Activated T-helper 1 cell treated with anti-CD3 and anti-CD28 coated beads, Interleukin-12 subunit alpha, Interleukin-12 subunit beta, Interleukin-2, Interleukin-4 antibody, amounts not matched to agents 30 ng/mL and 10 ng/mL and 1 ng/mL, durations not matched to agents 14 hours and 24 hours and 36 hours (primary cell): ENCODE measurements at regions of chr1 and their contacts with region 1.

Region 1: DNA sequence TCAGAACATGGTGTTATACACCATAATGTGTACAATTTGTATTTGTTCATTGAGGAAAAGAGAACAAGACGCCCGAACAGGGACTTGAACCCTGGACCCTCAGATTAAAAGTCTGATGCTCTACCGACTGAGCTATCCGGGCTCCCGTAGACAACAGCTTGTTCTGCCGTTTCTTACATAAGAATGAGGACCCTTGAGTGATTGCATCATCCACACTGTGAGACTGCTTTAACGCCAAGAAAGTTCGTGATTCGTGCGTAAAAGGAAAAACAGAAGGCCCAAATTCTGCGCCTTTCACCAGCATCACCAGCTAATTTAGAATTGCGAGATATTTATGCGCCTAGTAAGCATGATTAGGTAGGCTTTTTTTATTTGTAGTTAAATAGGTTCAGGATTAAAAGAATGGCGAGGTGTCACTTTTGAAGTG is 9.2 kb upstream of the MDM4 start:
- DNase-seq: peak; percentile 87
- H3K4me3 Mint-ChIP-seq: peak overlapping the region; percentile 94
- H3K27ac Mint-ChIP-seq: peak overlapping the region; percentile 98
- H3K4me1 Mint-ChIP-seq: peaks cover 48% of the 10 kb centered on the region
- H3K27me3 Mint-ChIP-seq: peaks cover 6% of the 10 kb centered on the region

Region 2: DNA sequence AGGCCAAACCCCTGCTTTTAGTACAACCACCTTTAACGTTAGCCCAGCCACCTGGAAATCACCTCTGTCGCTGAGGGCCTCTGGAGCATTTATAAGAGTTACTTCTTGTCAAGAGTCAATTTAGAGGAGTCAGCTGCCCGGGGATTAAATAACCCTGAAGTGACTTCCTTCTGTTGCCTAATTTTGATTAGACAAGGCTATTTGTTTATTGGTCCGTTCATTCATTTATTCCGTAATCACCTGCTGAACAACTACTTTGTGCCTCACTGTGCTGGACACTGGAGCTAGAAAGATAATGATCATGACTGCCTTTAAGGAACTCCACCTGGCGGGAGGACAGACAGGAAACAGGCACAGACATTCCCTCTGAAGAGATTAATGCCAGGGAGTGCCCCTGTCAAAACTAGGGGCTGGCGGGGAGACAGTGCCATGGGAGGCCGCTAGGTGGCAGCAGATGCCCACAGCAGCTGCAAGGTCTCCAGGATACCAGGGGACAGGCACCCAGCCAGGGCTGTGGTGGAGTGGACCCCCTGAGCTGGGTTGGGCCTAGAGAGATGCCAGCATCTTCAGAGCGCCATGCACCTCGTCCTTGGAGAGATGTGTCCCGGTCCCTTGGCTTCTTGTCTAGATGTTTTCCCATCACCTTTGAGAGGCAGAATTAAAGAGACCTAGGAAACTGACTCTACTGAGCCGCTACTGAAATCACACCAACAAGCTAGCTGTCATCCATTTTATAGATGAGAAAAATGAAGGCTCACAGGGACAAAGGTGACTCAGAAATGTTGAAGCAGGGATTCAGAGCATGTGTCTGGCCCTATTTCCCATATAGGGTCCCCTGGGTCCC is 344.5 kb before region 1 on chr1:
- intact Hi-C with region 1: loop called (anchors 1 kb)
- DNase-seq: peak; percentile 57
- H3K4me3 Mint-ChIP-seq: no peak overlapping the region
- H3K27ac Mint-ChIP-seq: no peak overlapping the region
- H3K4me1 Mint-ChIP-seq: no peaks in the 10 kb centered on the region
- H3K27me3 Mint-ChIP-seq: peaks cover 4% of the 10 kb centered on the region

Region 3: DNA sequence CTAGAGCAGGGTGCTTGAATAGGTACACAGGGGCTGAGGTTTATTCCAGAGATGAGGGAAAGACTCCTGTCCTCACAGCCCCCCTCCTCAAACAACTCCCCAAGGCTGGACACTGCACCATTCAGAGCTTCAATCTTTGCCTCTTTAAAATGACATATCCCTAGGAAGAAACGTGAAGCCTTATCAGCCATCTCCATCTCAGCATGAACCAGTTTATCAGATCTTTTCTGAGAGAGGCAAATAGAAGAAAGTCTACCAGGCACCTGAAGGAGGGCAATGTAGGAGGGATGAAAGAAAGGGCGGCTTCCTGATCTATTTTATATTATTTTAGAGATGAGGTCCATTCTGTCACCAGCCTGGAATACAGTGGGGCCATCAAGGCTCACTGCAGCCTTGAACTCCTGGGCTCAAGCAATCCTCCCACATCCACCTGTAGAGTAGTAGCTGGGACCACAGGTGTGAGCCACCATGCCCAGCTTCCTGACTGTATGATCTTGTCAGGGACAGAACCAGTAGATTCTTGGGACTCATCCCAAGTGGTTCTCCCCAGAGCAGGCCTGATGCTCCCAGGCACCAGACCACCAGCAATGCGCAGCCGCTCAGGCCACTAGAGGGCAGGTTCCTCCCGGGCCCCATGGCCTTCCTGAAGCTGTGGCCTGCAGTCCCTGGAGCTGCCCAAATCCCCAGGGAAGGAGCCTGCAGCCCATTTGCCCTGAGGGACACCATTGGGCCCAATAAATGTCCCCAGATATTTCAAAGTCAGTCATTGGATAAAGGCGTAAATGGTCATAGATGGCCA is 248.8 kb before region 1 on chr1:
- intact Hi-C with region 1: no loop called
- DNase-seq: no peak
- H3K4me3 Mint-ChIP-seq: no peak overlapping the region
- H3K27ac Mint-ChIP-seq: no peak overlapping the region
- H3K4me1 Mint-ChIP-seq: no peaks in the 10 kb centered on the region
- H3K27me3 Mint-ChIP-seq: peaks cover 5% of the 10 kb centered on the region

Region 4: GRCh38 chr1:204411451-204412204 is 95.3 kb before region 1 on chr1 and contains the start of gene PPP1R15B:
- intact Hi-C with region 1: loop called (anchors 1 kb)
- DNase-seq: peak; percentile 98
- H3K4me3 Mint-ChIP-seq: peak within 1 kb of the TSS; percentile 99
- H3K27ac Mint-ChIP-seq: peak within 1 kb of the TSS; percentile 99
- H3K4me1 Mint-ChIP-seq: peaks cover 12% of the 10 kb centered on the region
- H3K27me3 Mint-ChIP-seq: no peaks in the 10 kb centered on the region
- total RNA-seq, gene PPP1R15B: 75.8 and 76.2 TPM in 2 replicates

Region 5: GRCh38 chr1:204431310-204432165 is 75.4 kb before region 1 on chr1:
- intact Hi-C with region 1: loop called (anchors 1 kb)
- DNase-seq: peak; percentile 58
- H3K4me3 Mint-ChIP-seq: no peak overlapping the region
- H3K27ac Mint-ChIP-seq: no peak overlapping the region
- H3K4me1 Mint-ChIP-seq: no peaks in the 10 kb centered on the region
- H3K27me3 Mint-ChIP-seq: no peaks in the 10 kb centered on the region

Region 6: GRCh38 chr1:204446370-204447111 is 60.4 kb before region 1 on chr1:
- intact Hi-C with region 1: loop called (anchors 1 kb)
- DNase-seq: peak; percentile 66
- H3K4me3 Mint-ChIP-seq: no peak overlapping the region
- H3K27ac Mint-ChIP-seq: peak overlapping the region; percentile 49
- H3K4me1 Mint-ChIP-seq: peaks cover 48% of the 10 kb centered on the region
- H3K27me3 Mint-ChIP-seq: no peaks in the 10 kb centered on the region

Region 7: GRCh38 chr1:204544321-204544720 is 37.3 kb after region 1 on chr1:
- intact Hi-C with region 1: loop called (anchors 1 kb)
- DNase-seq: no peak
- H3K4me3 Mint-ChIP-seq: peak overlapping the region; percentile 35
- H3K27ac Mint-ChIP-seq: peak overlapping the region; percentile 66
- H3K4me1 Mint-ChIP-seq: peaks cover 57% of the 10 kb centered on the region
- H3K27me3 Mint-ChIP-seq: no peaks in the 10 kb centered on the region

Region 8: GRCh38 chr1:204619721-204620120 is 112.7 kb after region 1 on chr1:
- intact Hi-C with region 1: no loop called
- DNase-seq: no peak
- H3K4me3 Mint-ChIP-seq: no peak overlapping the region
- H3K27ac Mint-ChIP-seq: no peak overlapping the region
- H3K4me1 Mint-ChIP-seq: no peaks in the 10 kb centered on the region
- H3K27me3 Mint-ChIP-seq: peaks cover 2% of the 10 kb centered on the region